OCI-LY7 (cell line): ENCODE measurements at regions of chr19 and their contacts with region 1.

Region 1: DNA sequence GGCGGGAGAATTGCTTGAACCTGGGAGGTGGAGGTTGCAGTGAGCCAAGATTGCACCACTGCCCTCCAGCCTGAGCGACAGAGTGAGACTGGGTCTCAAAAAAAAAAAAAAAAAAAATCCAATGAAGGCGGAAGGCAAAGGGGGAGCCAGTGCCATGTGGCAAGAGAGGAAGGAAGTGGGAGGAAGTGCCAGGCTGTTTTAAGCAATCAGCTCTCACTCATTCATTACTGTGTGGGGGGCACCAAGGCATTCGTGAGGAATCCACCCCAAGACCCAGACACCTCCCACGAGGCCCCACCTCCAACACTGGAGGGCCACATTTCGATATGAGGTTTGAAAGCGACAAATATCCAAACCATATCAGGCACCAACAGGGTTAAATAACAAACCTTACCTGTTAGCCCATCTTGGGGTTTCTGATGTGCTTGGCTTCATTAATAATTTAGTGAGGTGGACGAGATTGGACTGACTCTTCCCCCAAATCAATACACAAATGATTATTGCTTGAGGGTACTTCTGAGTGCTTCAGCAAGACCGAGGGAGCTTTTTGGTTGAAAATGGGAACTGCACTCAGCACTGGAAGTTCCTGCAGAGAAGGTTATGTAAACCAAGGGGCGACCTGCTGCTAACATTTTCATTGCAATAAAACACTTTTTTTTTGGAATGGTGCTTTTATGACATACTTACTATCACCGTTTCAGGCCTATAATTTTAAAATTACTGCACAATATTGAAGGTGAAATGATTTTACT is 7.5 kb upstream of the LRP3 start:
- DNase-seq: no peak
- H3K4me3 ChIP-seq: no peak overlapping the region
- H3K27ac ChIP-seq: no peak overlapping the region
- H3K4me1 ChIP-seq: no peaks in the 10 kb centered on the region
- CTCF ChIP-seq: no peak

Region 2: DNA sequence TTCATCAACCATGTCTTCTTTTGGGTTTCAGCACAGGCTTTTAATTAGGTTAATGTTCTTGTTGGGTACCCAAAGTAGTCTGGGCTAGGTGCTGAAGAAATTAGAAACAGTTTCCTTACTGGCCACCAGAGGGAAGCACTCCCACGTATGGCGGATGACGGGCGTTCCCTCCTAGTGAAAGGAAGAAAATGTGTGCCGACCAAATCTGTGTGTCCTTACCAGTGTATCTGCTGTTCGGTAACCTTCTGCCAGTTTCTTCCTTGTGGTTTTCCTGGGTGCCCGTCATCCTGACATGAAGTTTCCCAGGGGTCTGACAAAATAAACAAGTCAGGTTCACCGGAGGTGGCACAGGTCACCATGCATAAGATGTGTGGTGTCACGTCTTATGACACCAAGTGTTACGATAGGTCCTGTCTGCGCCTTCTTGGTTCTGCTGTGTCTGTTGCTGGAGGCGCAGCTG is 60.6 kb before region 1 on chr19:
- CTCF ChIA-PET with region 1: interaction called, 4 read pairs
- POLR2A ChIA-PET with region 1: no interaction called
- intact Hi-C with region 1: loop called (anchors 1 kb)
- DNase-seq: peak; percentile 59
- H3K4me3 ChIP-seq: no peak overlapping the region
- H3K27ac ChIP-seq: no peak overlapping the region
- H3K4me1 ChIP-seq: no peaks in the 10 kb centered on the region
- CTCF ChIP-seq: peak; percentile 90

Region 3: DNA sequence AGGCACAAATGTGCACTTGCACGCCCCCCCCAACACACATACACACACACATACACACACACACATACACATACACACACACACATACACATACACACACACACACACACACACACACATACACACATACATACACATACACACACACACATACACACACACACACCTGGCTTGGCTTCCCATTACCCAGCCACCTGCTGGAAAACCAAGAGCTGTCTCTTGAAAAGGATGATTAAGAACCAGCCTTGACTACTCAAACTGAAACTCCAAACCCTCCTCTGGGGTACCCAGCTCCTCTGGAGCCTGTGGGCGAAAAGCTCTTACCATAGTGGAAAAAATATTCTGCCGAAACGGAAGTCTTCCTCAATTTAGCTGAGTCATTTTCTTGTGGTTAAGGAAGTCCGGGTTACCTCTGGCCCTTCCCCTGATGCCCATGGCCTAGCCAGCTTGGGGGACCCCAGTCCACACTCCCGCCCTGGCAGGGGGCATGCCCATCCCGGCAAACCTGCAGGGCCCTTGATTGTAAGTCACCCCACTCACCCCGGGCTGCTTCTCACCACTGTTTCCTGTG is 93.8 kb after region 1 on chr19:
- CTCF ChIA-PET with region 1: no interaction called
- POLR2A ChIA-PET with region 1: no interaction called
- intact Hi-C with region 1: no loop called
- DNase-seq: no peak
- H3K4me3 ChIP-seq: no peak overlapping the region
- H3K27ac ChIP-seq: no peak overlapping the region
- H3K4me1 ChIP-seq: no peaks in the 10 kb centered on the region
- CTCF ChIP-seq: no peak